GM10248 (cell line): ENCODE measurements at regions of chr18 and their contacts with region 1.

Region 1: DNA sequence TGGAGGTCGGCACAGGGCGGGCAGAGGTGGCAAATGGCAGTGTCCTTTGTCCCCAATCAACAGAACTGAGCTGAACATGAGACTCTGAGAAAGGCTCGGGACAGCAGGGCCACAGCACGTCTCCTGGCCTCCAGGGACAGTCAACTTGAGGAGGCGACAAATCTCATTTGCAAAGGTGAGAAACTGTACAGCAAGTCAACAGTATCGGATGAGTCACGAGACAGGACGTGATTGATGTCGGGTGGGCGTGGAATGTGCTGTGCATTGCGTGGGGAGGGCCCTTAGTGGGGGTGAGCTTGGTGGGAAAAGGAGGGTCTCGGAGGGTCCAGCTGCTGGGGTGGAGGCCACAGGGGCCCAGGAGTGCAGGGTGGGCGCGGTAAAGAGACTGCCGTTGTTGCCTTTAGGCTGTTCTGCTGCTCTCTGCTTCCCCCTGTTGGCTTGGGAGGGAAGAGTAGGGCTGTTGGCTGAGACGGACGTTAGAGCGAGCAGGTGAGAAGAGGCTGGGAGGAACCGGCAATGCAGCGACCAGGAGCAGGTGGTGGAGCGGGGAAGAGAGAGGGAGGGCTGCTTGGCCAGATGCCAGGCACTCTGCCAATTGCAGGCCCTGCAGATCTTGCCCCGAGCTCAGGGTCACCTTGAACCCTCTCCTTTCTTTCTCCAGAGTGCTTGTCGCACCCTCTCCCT is 164.3 kb downstream of the BCL2 start:
- DNase-seq: peak; percentile 62
- CTCF ChIP-seq: peak; percentile 90

Region 2: GRCh38 chr18:62963507-62963906 is 191.8 kb before region 1 on chr18:
- CTCF ChIA-PET with region 1: no interaction called
- POLR2A ChIA-PET with region 1: no interaction called
- DNase-seq: no peak
- CTCF ChIP-seq: no peak

Region 3: DNA sequence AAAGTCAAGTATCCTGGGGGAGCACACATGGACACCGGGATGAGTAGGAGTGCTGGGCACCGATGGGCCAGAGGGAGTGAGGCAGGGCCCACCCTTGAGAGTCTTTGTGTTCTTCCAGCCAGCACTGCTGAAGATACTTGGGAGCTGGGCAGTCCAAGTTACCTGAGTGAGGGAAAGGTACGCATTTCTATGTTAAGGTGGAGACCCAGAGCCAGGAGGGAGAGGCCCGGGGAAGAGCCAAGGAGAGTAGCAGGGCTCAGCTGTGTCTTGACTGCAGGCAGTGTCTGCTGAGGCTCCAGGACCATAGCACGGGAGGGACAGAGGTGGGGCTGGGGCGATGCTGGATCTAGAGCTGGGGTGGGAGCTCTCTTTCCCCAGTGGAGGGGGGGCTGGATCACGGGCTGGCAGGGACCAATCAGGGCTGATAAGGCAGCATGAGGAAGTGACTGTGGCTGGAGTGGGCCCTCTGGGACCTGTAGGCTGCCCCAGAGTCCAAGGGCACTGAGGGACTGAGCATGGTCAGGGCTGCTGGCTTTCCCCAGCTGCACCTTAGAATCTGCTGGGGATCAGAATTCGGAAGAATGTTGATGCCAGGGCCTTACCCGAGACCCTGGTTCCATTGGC is 150.7 kb before region 1 on chr18:
- CTCF ChIA-PET with region 1: no interaction called
- POLR2A ChIA-PET with region 1: no interaction called
- DNase-seq: no peak
- CTCF ChIP-seq: no peak

Region 4: DNA sequence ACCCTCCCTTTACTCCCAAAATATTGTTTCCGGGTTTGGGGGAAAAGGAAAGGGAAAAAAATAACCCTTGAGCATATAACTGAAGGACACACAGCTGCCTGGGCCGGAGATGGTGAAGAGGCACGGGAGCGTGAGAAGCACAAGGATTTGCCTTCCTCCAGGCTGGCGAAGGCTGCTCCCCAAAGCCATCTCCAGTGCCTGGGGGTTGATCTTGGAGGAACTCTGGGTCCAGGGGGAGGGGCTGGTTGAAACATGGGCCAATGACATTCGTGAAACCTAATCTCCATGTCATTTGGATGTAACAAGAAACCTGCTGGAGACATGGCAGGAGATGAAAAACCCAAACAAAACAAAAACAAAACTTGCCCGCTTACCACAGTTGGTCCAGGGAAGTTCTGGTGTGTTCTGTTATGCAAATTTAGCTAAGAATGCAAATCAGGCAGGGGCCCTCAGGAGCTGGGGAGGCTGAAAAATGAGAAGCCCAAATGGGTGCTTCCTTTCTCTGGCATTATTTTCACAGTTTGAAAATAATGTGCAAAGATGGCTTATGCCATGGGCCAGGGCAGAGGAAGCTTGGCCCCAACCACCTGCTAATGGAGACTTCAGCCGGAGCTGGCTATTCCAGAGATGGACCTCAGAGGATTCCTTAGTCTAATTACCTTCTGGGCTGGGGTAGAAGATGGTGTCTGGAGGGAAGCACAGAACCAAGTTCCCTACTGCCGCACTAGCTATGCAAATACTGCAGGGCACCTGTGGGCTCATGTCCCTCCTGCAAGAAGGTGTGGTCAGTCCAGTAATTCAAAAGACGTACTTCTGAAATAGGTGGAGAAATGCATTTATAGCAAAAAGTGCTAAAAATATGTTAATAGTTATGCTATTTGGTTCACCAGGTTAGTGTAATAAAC is 16.6 kb before region 1 on chr18:
- CTCF ChIA-PET with region 1: interaction called, 172 read pairs
- POLR2A ChIA-PET with region 1: interaction called, 18 read pairs
- DNase-seq: peak; percentile 51
- CTCF ChIP-seq: no peak

Region 5: GRCh38 chr18:63186520-63187222 is 31.4 kb after region 1 on chr18:
- CTCF ChIA-PET with region 1: interaction called, 10 read pairs
- POLR2A ChIA-PET with region 1: interaction called, 5 read pairs
- DNase-seq: no peak
- CTCF ChIP-seq: no peak

Region 6: DNA sequence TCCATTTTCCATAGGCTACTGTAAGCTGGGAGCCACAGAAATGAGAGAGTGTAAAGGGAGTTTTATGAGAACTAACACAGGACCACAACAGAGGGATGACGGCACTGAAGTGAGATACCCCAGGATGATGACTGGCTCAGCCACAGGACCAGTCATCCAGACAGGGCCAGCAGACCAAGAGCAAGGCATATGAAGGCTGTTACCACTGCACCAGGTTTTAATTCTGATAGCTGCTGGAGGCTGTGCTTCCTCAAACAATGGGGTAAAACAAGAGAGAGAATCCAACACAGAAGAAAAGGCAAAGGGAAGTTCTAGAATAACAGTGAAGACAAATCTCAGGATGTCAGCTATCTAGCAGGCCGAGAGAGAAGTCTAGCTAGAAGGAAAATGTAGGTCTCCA is 69.3 kb after region 1 on chr18:
- CTCF ChIA-PET with region 1: interaction called, 11 read pairs
- POLR2A ChIA-PET with region 1: no interaction called
- DNase-seq: no peak
- CTCF ChIP-seq: no peak

Region 7: DNA sequence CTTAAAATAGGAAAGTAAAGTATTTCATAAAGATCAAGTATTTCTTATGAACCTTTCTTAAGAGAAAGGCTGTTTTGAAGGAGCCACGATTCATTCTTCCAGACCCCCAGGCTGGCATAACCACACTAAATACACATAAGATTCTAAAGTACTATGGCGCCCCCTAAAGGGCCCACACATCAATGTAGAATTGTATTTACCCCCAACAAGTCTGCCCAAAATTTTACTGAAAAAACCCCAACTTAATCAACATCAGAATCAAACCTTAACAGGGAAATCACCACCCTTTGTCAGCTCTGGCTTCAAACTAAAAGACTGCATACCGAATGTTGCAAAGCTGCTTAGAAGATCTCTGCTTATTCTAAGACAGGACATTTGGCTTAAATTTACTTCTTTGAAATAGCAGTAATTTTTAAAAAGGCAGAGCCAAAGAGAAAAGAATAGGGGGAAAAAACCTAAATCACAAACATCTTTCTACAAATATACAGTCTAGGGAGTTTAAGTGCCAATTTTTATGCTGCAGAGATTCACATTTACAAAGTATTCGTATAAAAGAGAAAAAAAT is 184.7 kb after region 1 on chr18:
- CTCF ChIA-PET with region 1: interaction called, 10 read pairs
- POLR2A ChIA-PET with region 1: no interaction called
- DNase-seq: no peak
- CTCF ChIP-seq: peak; percentile 28